ENCODE measurements at regions of chr3 and their contacts with region 1.

Region 1: GRCh38 chr3:100068826-100069225 is 45.5 kb downstream of the FILIP1L start:
- DNase-seq: peak; percentile 36 to 88
- H3K4me3 ChIP-seq: no peak overlapping the region
- H3K27ac ChIP-seq: no peak overlapping the region
- H3K4me1 ChIP-seq: peaks cover 0 to 4% (median 3%) of the 10 kb centered on the region in 4 experiments; a peak in 3 of 7 replicates
- H3K27me3 ChIP-seq: no peaks in the 10 kb centered on the region
- CTCF ChIP-seq: peak; percentile 74 to 86 (median 77)
- EP300 ChIP-seq: no peak
- POLR2A ChIP-seq: no peak
- RAD21 ChIP-seq: peak; percentile 81 to 87

Region 2: GRCh38 chr3:100057716-100058575 is 10.9 kb before region 1 on chr3:
- CTCF ChIA-PET with region 1: interaction called, 23 read pairs
- POLR2A ChIA-PET with region 1: interaction called, 3 read pairs
- DNase-seq: no peak
- H3K4me3 ChIP-seq: no peak overlapping the region
- H3K27ac ChIP-seq: no peak overlapping the region
- H3K4me1 ChIP-seq: peaks cover 0 to 5% (median 3%) of the 10 kb centered on the region in 4 experiments; a peak in 4 of 7 replicates
- H3K27me3 ChIP-seq: no peaks in the 10 kb centered on the region
- CTCF ChIP-seq: no peak
- EP300 ChIP-seq: no peak
- POLR2A ChIP-seq: no peak
- RAD21 ChIP-seq: peak; percentile 17 to 21; a peak in 3 of 4 replicates

Region 3: GRCh38 chr3:100089812-100090668 is 21.2 kb after region 1 on chr3:
- CTCF ChIA-PET with region 1: interaction called, 14 read pairs
- POLR2A ChIA-PET with region 1: no interaction called
- DNase-seq: peak in 1 of 2 experiments; percentile 10
- H3K4me3 ChIP-seq: no peak overlapping the region
- H3K27ac ChIP-seq: no peak overlapping the region
- H3K4me1 ChIP-seq: peaks cover 0 to 7% (median 3%) of the 10 kb centered on the region in 4 experiments; a peak in 5 of 7 replicates
- H3K27me3 ChIP-seq: no peaks in the 10 kb centered on the region
- CTCF ChIP-seq: peak; percentile 49 to 76 (median 51)
- EP300 ChIP-seq: no peak
- POLR2A ChIP-seq: no peak
- RAD21 ChIP-seq: peak; percentile 54 to 61

Region 4: DNA sequence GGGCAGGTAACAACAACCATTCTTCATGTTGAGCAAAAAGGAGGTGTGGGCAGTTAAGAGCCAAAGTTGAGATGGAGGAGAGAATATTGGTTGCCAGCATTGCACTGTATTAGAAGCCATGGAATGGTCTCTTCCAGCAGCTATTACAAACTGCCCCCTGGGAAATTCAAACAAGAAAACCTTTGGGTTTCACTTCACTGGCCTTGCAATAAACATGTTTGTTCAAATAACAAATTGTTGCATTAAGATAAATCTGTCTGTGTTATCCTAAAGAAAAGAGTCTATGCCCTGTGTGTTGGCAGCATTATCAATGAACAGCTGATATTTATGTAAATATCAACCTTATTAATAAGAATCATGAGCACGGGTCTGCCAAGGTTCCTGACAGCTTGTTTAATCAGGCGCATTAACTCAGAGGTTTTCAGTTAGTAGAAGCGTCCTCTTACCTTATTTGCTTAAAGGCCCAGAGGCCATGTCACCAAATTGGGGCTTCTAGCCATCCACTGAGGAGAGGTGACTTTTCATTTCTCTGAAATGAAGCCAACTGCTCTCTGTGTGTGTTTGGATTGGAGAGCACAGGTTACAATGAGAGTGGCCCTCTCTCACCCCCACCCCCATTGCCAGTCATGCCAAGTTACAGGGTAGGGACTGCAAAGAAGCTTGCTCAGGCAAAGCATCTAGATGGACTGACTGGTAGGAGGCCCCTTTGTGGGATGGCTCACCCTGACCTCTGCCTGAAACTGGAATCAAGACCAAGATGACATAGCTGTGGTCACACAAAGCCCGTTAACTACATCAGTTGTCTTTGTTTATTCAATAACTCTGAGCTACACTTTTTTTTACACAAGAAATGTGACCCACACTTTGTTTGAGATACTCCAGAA is 35.0 kb after region 1 on chr3:
- CTCF ChIA-PET with region 1: interaction called, 10 read pairs
- POLR2A ChIA-PET with region 1: no interaction called
- DNase-seq: no peak
- H3K4me3 ChIP-seq: no peak overlapping the region
- H3K27ac ChIP-seq: no peak overlapping the region
- H3K4me1 ChIP-seq: peaks cover 0 to 2% (median 0%) of the 10 kb centered on the region in 4 experiments; a peak in 1 of 7 replicates
- H3K27me3 ChIP-seq: no peaks in the 10 kb centered on the region
- CTCF ChIP-seq: no peak
- EP300 ChIP-seq: no peak
- POLR2A ChIP-seq: no peak
- RAD21 ChIP-seq: no peak